HepG2 (cell line): ENCODE measurements at regions of chr1 and their contacts with region 1.

Region 1: GRCh38 chr1:224929335-224930237 is at the start of gene DNAH14:
- DNase-seq: peak; percentile 71
- ATAC-seq: peak; percentile 100
- H3K4me3 ChIP-seq: peak within 1 kb of the TSS; percentile 61 to 78 (median 75)
- H3K27ac ChIP-seq: peak within 1 kb of the TSS; percentile 70
- H3K4me1 ChIP-seq: 0 out of 2 replicates have a peak, but pooled peaks cover 4% of the 10 kb centered on the region
- H3K27me3 ChIP-seq: no peaks in the 10 kb centered on the region
- CTCF ChIP-seq: peak; percentile 39
- EP300 ChIP-seq: no peak
- POLR2A ChIP-seq: peak; percentile 54 to 90; a peak in 3 of 4 replicates
- RAD21 ChIP-seq: no peak; the same call in 1 of the 2 replicates
- total RNA-seq, gene DNAH14: 19.0 and 27.5 TPM in 2 replicates

Region 2: GRCh38 chr1:224113918-224114786 is 815.4 kb before region 1 on chr1 and contains the start of gene FBXO28:
- CTCF ChIA-PET with region 1: no interaction called
- POLR2A ChIA-PET with region 1: no interaction called
- in situ Hi-C with region 1: no loop called
- intact Hi-C with region 1: loop called (anchors 5 kb)
- DNase-seq: peak; percentile 91
- ATAC-seq: peak; percentile 98
- H3K4me3 ChIP-seq: peak within 1 kb of the TSS; percentile 88 to 96 (median 89)
- H3K27ac ChIP-seq: peak within 1 kb of the TSS; percentile 77
- H3K4me1 ChIP-seq: peaks cover 20% of the 10 kb centered on the region
- H3K27me3 ChIP-seq: peaks cover 0 to 3% of the 10 kb centered on the region in 2 experiments; a peak in 1 of 5 replicates
- CTCF ChIP-seq: no peak
- EP300 ChIP-seq: 0 out of 4 replicates have a peak, but pooled peaks of 1 of the 2 experiments have one; percentile 30
- POLR2A ChIP-seq: peak; percentile 87 to 94
- RAD21 ChIP-seq: peak; percentile 41; the same call in 1 of the 2 replicates
- total RNA-seq, gene FBXO28: 29.1 and 38.2 TPM in 2 replicates

Region 3: DNA sequence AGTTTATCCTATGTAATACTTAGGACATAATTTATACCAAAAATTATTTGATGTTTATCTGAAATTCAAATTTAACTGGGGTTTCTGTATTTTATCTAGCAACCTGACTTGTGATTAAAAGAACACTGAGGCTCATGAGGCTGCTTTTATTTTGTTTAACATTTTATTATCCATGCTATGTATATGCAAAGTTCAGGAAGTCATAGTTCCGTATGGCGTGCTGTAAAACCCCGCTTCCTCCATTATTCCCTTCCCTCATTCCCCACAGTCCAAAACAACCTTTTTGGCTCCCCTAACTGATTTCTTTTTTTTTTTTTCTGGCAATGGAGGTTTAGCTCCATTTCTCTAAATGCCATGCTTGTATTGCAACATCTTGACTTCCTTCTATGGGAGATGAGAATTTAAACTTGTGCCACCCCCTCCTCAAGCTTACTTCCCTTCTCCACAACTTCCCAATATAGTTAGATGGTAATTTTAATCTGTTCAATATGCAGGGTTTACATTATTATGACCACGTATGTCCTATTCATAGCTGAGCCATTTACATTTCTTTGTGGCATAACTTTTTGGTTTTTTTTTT is 138.1 kb before region 1 on chr1:
- CTCF ChIA-PET with region 1: no interaction called
- POLR2A ChIA-PET with region 1: no interaction called
- in situ Hi-C with region 1: no loop called
- intact Hi-C with region 1: no loop called
- DNase-seq: no peak
- ATAC-seq: no peak
- H3K4me3 ChIP-seq: no peak overlapping the region
- H3K27ac ChIP-seq: no peak overlapping the region
- H3K4me1 ChIP-seq: no peaks in the 10 kb centered on the region
- H3K27me3 ChIP-seq: no peaks in the 10 kb centered on the region
- CTCF ChIP-seq: no peak
- EP300 ChIP-seq: no peak
- POLR2A ChIP-seq: no peak
- RAD21 ChIP-seq: no peak

Region 4: DNA sequence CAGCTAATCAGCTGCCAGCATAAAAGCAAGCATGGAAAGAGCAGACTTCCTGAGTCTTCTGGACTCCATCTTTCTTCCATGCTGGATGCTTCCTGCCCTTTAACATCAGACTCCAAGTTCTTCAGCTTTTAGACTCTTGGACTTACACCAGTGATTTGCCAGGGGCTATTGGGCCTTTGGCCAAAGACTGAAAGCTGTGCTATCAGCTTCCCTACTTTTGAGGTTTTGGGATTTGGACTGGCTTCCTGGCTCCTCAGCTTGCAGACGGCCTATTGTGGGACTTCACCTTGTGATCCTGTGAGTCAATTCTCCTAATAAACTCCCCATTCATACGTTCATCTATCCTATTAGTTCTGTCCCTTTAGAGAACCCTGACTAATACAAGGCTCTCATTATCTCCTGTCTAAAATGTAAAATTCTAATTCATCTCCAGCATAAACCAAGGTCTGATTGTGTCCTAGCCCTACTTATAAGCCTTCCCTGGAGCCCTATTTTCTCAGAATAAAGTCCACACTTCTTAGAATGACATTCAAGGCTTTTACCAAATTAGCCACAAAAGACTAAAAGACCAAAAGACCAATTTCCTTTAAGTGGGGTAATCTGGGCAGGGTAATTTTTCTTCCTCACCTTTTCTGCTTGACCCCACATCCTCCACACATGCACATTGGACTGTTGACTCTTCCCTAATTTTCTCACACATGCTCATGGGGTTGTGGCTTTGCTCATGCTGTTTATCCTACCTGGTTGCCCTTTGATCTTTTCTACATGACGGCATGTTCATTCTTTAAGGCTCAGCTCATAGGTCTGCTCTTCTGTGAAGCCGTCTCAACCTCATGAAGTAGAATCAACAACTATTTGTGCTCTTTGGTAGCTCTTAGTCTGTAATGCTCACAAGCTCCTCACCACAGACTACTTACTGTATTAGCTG is 741.5 kb after region 1 on chr1:
- CTCF ChIA-PET with region 1: no interaction called
- POLR2A ChIA-PET with region 1: no interaction called
- in situ Hi-C with region 1: no loop called
- intact Hi-C with region 1: no loop called
- DNase-seq: peak; percentile 97
- ATAC-seq: peak; percentile 96
- H3K4me3 ChIP-seq: peak overlapping the region in 1 of 3 experiments; percentile 30; a peak in 1 of 6 replicates
- H3K27ac ChIP-seq: peak overlapping the region; percentile 63
- H3K4me1 ChIP-seq: peaks cover 27% of the 10 kb centered on the region
- H3K27me3 ChIP-seq: no peaks in the 10 kb centered on the region
- CTCF ChIP-seq: no peak
- EP300 ChIP-seq: peak; percentile 27 to 86; a peak in 3 of 4 replicates
- POLR2A ChIP-seq: peak in 1 of 2 experiments; percentile 35; a peak in 1 of 4 replicates
- RAD21 ChIP-seq: no peak